Caco-2 (cell line): ENCODE measurements at regions of chr20 and their contacts with region 1.

Region 1: GRCh38 chr20:63641792-63642544 is 11.3 kb downstream of the STMN3 start:
- DNase-seq: peak; percentile 100
- H3K4me3 ChIP-seq: peak overlapping the region; percentile 73
- H3K4me3 Mint-ChIP-seq: peak overlapping the region; percentile 79
- H3K27ac Mint-ChIP-seq: peak overlapping the region; percentile 67
- H3K4me1 ChIP-seq: peaks cover 21% of the 10 kb centered on the region
- H3K4me1 Mint-ChIP-seq: peaks cover 8% of the 10 kb centered on the region
- H3K27me3 ChIP-seq: no peaks in the 10 kb centered on the region
- H3K27me3 Mint-ChIP-seq: no peaks in the 10 kb centered on the region
- CTCF ChIP-seq: peak; percentile 72 to 92

Region 2: GRCh38 chr20:63574156-63574828 is 67.7 kb before region 1 on chr20 and contains the start of gene HELZ2:
- CTCF ChIA-PET with region 1: interaction called, 10 read pairs
- POLR2A ChIA-PET with region 1: interaction called, 5 read pairs
- intact Hi-C with region 1: no loop called
- DNase-seq: peak; percentile 82 to 85
- H3K4me3 ChIP-seq: peak within 1 kb of the TSS; percentile 91
- H3K4me3 Mint-ChIP-seq: peak within 1 kb of the TSS; percentile 76
- H3K27ac Mint-ChIP-seq: peak within 1 kb of the TSS; percentile 83
- H3K4me1 ChIP-seq: peaks cover 15% of the 10 kb centered on the region
- H3K4me1 Mint-ChIP-seq: no peaks in the 10 kb centered on the region
- H3K27me3 ChIP-seq: no peaks in the 10 kb centered on the region
- H3K27me3 Mint-ChIP-seq: peaks cover 3% of the 10 kb centered on the region
- CTCF ChIP-seq: no peak
- total RNA-seq, gene HELZ2: 35.2 and 36.5 TPM in 2 replicates

Region 3: DNA sequence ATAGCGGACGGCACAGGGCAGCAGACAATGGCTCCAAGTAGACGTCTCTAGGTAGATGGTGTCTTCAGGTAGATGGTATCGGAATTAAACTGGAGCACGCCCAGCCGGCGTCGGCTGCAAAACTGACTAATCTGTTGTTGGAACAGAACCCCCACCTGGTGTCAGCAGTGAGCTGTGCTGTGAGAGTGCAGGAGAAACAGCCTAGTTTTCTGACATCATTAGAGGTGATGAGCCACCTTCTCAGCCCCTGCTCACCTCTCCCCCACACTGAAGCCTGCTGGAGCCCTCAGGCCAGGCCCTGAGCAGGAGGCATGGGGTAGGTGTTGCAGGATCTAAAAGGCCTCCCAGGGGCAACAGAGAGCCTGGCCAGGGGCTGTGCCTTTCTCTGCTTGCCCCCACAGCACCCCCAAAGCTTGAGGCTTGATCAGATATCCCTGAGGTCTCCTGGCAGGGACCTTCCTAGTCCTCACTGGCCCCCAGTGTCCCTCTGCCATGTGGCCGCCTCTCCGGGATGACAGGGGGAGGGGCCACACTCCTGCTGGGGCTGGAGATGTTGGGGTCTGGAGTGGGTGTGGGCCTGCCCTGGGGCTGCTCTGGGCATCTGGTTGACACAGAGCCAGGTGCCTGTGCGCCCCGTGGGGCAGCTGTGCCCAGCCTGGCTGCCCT is 61.0 kb before region 1 on chr20:
- CTCF ChIA-PET with region 1: interaction called, 3 read pairs
- POLR2A ChIA-PET with region 1: no interaction called
- intact Hi-C with region 1: loop called (anchors 2 kb)
- DNase-seq: peak; percentile 84 to 86
- H3K4me3 ChIP-seq: no peak overlapping the region
- H3K4me3 Mint-ChIP-seq: no peak overlapping the region
- H3K27ac Mint-ChIP-seq: no peak overlapping the region
- H3K4me1 ChIP-seq: no peaks in the 10 kb centered on the region
- H3K4me1 Mint-ChIP-seq: no peaks in the 10 kb centered on the region
- H3K27me3 ChIP-seq: no peaks in the 10 kb centered on the region
- H3K27me3 Mint-ChIP-seq: peaks cover 3% of the 10 kb centered on the region
- CTCF ChIP-seq: peak; percentile 78 to 92

Region 4: DNA sequence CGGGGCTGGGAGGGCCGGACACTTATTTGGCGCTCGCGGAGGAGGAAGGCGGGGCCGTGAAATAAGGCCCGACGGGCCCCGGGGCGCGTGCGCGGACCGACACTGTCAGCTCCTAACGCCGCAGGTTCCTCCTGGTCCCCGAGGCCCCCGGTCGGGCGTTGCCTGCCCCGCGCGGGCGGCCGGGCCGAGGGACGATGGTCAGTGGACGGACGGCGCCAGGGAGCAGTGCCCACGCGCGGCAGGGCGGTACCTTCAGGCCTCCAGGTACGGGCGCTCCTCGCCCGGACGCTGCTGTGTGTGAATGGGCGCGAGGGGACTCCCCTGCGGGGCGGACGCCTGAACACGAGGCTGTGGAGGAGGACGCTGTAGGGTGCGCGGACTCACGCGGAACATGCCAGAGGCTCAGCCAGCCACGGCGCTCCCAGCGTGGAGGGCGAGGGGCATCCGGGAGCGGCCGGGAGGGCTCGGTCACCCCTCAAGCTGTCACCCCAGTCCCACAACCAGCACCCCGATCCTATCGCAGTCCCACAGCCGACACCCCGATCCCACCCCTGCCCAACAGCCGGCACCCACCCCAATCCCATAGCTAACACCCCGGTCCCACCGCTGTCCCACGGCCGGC is 14.7 kb before region 1 on chr20:
- CTCF ChIA-PET with region 1: interaction called, 19 read pairs
- POLR2A ChIA-PET with region 1: interaction called, 30 read pairs
- intact Hi-C with region 1: loop called (anchors 2 kb)
- DNase-seq: peak; percentile 98 to 100
- H3K4me3 ChIP-seq: peak overlapping the region; percentile 91
- H3K4me3 Mint-ChIP-seq: peak overlapping the region; percentile 80
- H3K27ac Mint-ChIP-seq: peak overlapping the region; percentile 80
- H3K4me1 ChIP-seq: peaks cover 18% of the 10 kb centered on the region
- H3K4me1 Mint-ChIP-seq: peaks cover 25% of the 10 kb centered on the region
- H3K27me3 ChIP-seq: no peaks in the 10 kb centered on the region
- H3K27me3 Mint-ChIP-seq: no peaks in the 10 kb centered on the region
- CTCF ChIP-seq: no peak

Region 5: DNA sequence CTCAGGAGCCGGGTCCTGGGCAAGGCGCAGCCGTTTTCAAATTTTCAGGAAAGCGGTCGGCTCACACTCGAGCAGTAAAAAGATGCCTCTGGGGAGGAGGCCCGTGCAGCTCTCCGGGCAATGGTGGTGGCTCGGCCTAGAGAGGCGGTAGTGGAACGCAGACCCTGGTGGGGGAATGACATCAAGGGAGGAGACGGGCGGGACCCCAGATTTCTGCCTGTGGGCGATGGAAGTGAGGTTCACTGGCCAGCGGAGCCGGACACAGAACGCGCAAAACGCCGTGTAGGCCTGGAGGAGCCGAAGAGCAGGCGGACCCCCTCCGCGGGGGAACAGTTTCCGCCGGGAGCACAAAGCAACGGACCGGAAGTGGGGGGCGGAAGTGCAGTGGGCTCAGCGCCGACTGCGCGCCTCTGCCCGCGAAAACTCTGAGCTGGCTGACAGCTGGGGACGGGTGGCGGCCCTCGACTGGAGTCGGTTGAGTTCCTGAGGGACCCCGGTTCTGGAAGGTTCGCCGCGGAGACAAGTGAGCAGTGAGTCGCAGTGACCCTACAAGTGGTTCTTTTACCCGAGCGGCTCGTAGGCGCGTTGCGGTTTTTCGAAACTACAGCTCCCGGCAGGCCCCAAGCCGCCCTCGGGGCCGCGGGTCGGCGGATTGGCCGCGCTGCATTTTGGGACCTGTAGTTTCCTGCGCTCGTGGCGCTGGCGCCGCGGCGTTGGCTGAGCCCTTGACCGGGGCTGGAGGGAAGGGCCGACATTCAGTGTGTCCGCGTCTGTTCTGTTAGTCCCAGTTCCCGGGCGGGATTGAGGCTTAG is 16.2 kb after region 1 on chr20 and contains the start of gene RTEL1:
- CTCF ChIA-PET with region 1: interaction called, 29 read pairs
- POLR2A ChIA-PET with region 1: interaction called, 16 read pairs
- intact Hi-C with region 1: loop called (anchors 1 kb)
- DNase-seq: peak; percentile 96 to 99
- H3K4me3 ChIP-seq: peak within 1 kb of the TSS; percentile 82
- H3K4me3 Mint-ChIP-seq: peak within 1 kb of the TSS; percentile 86
- H3K27ac Mint-ChIP-seq: peak within 1 kb of the TSS; percentile 77
- H3K4me1 ChIP-seq: peaks cover 10% of the 10 kb centered on the region
- H3K4me1 Mint-ChIP-seq: peaks cover 15% of the 10 kb centered on the region
- H3K27me3 ChIP-seq: no peaks in the 10 kb centered on the region
- H3K27me3 Mint-ChIP-seq: no peaks in the 10 kb centered on the region
- CTCF ChIP-seq: no peak
- total RNA-seq, gene RTEL1: 51.1 and 61.6 TPM in 2 replicates

Region 6: DNA sequence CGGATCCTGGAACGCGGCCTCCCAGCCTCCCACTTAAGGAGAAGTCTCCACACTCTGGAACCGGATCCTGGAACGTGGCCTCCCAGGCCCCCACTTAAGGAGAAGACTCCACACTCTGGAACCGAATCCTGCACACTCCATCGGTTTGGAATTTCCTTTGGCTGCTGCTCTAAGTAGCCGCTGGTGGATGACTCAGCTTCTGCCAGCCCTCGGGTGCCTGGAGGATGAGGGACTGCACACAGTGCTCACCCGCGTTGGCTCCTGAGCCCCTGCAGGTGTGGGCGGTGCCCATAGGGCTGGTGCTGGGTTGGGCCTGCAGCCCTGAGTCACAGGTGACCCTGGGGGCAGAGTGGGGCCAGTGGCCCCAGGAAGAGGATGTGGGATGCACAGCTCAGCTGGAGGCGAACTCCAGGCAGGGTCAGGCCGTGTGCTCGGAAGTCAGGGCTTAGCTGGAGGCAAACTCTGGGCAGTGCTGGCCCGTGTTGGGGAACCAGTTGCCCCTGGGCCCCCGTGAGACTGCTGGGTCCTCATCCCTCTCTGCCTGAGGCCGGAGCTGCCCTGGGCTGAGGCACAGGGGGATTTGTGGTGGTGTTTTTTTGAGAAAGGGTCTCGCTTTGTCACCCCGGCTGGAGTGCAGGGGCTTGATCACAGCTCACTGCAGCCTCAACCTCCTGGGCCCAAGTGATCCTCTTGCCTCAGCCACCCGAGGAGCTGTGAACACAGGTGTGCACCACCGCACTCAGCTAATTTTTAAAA is 40.6 kb after region 1 on chr20:
- CTCF ChIA-PET with region 1: no interaction called
- POLR2A ChIA-PET with region 1: no interaction called
- intact Hi-C with region 1: no loop called
- DNase-seq: peak in 1 of 2 experiments; percentile 93
- H3K4me3 ChIP-seq: no peak overlapping the region
- H3K4me3 Mint-ChIP-seq: peak overlapping the region; percentile 8
- H3K27ac Mint-ChIP-seq: peak overlapping the region; percentile 63
- H3K4me1 ChIP-seq: peaks cover 34% of the 10 kb centered on the region
- H3K4me1 Mint-ChIP-seq: no peaks in the 10 kb centered on the region
- H3K27me3 ChIP-seq: no peaks in the 10 kb centered on the region
- H3K27me3 Mint-ChIP-seq: no peaks in the 10 kb centered on the region
- CTCF ChIP-seq: no peak

Region 7: DNA sequence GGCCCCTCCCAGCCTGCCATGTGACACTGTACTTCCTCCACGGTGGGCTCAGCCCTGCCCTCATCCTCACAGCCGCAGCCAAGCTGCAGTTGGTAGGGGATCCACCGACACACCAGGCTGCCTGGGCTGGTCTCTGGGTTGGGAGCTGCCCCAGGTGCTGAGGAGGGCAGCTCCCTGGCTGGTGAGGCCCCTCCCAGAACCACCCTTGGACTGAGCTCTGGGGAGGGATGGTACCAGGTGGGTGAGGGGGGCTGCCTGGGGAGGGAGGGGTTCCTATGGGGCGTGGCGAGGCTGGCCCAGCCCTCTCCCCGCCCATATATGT is 54.3 kb after region 1 on chr20:
- CTCF ChIA-PET with region 1: no interaction called
- POLR2A ChIA-PET with region 1: no interaction called
- intact Hi-C with region 1: no loop called
- DNase-seq: peak in 1 of 2 experiments; percentile 78
- H3K4me3 ChIP-seq: no peak overlapping the region
- H3K4me3 Mint-ChIP-seq: peak overlapping the region; percentile 66
- H3K27ac Mint-ChIP-seq: peak overlapping the region; percentile 94
- H3K4me1 ChIP-seq: peaks cover 26% of the 10 kb centered on the region
- H3K4me1 Mint-ChIP-seq: peaks cover 11% of the 10 kb centered on the region
- H3K27me3 ChIP-seq: no peaks in the 10 kb centered on the region
- H3K27me3 Mint-ChIP-seq: peaks cover 2% of the 10 kb centered on the region
- CTCF ChIP-seq: no peak

Region 8: GRCh38 chr20:63894358-63895201 is 252.6 kb after region 1 on chr20 and contains the start of gene DNAJC5:
- CTCF ChIA-PET with region 1: no interaction called
- POLR2A ChIA-PET with region 1: interaction called, 10 read pairs
- intact Hi-C with region 1: no loop called
- DNase-seq: peak; percentile 99 to 100
- H3K4me3 ChIP-seq: peak within 1 kb of the TSS; percentile 61
- H3K4me3 Mint-ChIP-seq: peak within 1 kb of the TSS; percentile 76
- H3K27ac Mint-ChIP-seq: peak within 1 kb of the TSS; percentile 85
- H3K4me1 ChIP-seq: peaks cover 27% of the 10 kb centered on the region
- H3K4me1 Mint-ChIP-seq: peaks cover 27% of the 10 kb centered on the region
- H3K27me3 ChIP-seq: no peaks in the 10 kb centered on the region
- H3K27me3 Mint-ChIP-seq: no peaks in the 10 kb centered on the region
- CTCF ChIP-seq: no peak
- total RNA-seq, gene DNAJC5: 117 and 124 TPM in 2 replicates

Region 9: GRCh38 chr20:64069614-64070243 is 427.8 kb after region 1 on chr20:
- CTCF ChIA-PET with region 1: no interaction called
- POLR2A ChIA-PET with region 1: interaction called, 11 read pairs
- intact Hi-C with region 1: no loop called
- DNase-seq: peak; percentile 84 to 88
- H3K4me3 ChIP-seq: no peak overlapping the region
- H3K4me3 Mint-ChIP-seq: no peak overlapping the region
- H3K27ac Mint-ChIP-seq: no peak overlapping the region
- H3K4me1 ChIP-seq: no peaks in the 10 kb centered on the region
- H3K4me1 Mint-ChIP-seq: peaks cover 12% of the 10 kb centered on the region
- H3K27me3 ChIP-seq: no peaks in the 10 kb centered on the region
- H3K27me3 Mint-ChIP-seq: no peaks in the 10 kb centered on the region
- CTCF ChIP-seq: peak; percentile 99

Region 10: GRCh38 chr20:64188682-64189529 is 546.9 kb after region 1 on chr20:
- CTCF ChIA-PET with region 1: no interaction called
- POLR2A ChIA-PET with region 1: no interaction called
- intact Hi-C with region 1: no loop called
- DNase-seq: peak; percentile 86 to 95
- H3K4me3 ChIP-seq: no peak overlapping the region
- H3K4me3 Mint-ChIP-seq: peak overlapping the region; percentile 46
- H3K27ac Mint-ChIP-seq: peak overlapping the region; percentile 69
- H3K4me1 ChIP-seq: peaks cover 22% of the 10 kb centered on the region
- H3K4me1 Mint-ChIP-seq: peaks cover 21% of the 10 kb centered on the region
- H3K27me3 ChIP-seq: no peaks in the 10 kb centered on the region
- H3K27me3 Mint-ChIP-seq: peaks cover 12% of the 10 kb centered on the region
- CTCF ChIP-seq: no peak